Activated T-helper 1 cell treated with anti-CD3 and anti-CD28 coated beads, Interleukin-12 subunit alpha, Interleukin-12 subunit beta, Interleukin-2, Interleukin-4 antibody, amounts not matched to agents 30 ng/mL and 10 ng/mL and 1 ng/mL, durations not matched to agents 14 hours and 24 hours and 36 hours (primary cell): ENCODE measurements at regions of chr1 and their contacts with region 1.

Region 1: GRCh38 chr1:77143529-77144121 is 75.6 kb downstream of the PIGK start:
- DNase-seq: no peak
- H3K4me3 Mint-ChIP-seq: no peak overlapping the region
- H3K27ac Mint-ChIP-seq: no peak overlapping the region
- H3K4me1 Mint-ChIP-seq: no peaks in the 10 kb centered on the region
- H3K27me3 Mint-ChIP-seq: no peaks in the 10 kb centered on the region

Region 2: GRCh38 chr1:75991497-75992114 is 1152.0 kb before region 1 on chr1:
- intact Hi-C with region 1: loop called (anchors 1 kb)
- DNase-seq: peak; percentile 25
- H3K4me3 Mint-ChIP-seq: no peak overlapping the region
- H3K27ac Mint-ChIP-seq: no peak overlapping the region
- H3K4me1 Mint-ChIP-seq: no peaks in the 10 kb centered on the region
- H3K27me3 Mint-ChIP-seq: peaks cover 9% of the 10 kb centered on the region

Region 3: GRCh38 chr1:76330991-76331603 is 812.5 kb before region 1 on chr1:
- intact Hi-C with region 1: loop called (anchors 5 kb)
- DNase-seq: peak; percentile 4
- H3K4me3 Mint-ChIP-seq: no peak overlapping the region
- H3K27ac Mint-ChIP-seq: no peak overlapping the region
- H3K4me1 Mint-ChIP-seq: peaks cover 9% of the 10 kb centered on the region
- H3K27me3 Mint-ChIP-seq: peaks cover 4% of the 10 kb centered on the region

Region 4: GRCh38 chr1:76901158-76901767 is 242.4 kb before region 1 on chr1:
- intact Hi-C with region 1: loop called (anchors 10 kb)
- DNase-seq: peak; percentile 7
- H3K4me3 Mint-ChIP-seq: no peak overlapping the region
- H3K27ac Mint-ChIP-seq: no peak overlapping the region
- H3K4me1 Mint-ChIP-seq: no peaks in the 10 kb centered on the region
- H3K27me3 Mint-ChIP-seq: no peaks in the 10 kb centered on the region

Region 5: GRCh38 chr1:77081834-77082233 is 61.8 kb before region 1 on chr1:
- intact Hi-C with region 1: no loop called
- DNase-seq: no peak
- H3K4me3 Mint-ChIP-seq: no peak overlapping the region
- H3K27ac Mint-ChIP-seq: no peak overlapping the region
- H3K4me1 Mint-ChIP-seq: no peaks in the 10 kb centered on the region
- H3K27me3 Mint-ChIP-seq: peaks cover 4% of the 10 kb centered on the region

Region 6: GRCh38 chr1:77100870-77101269 is 42.8 kb before region 1 on chr1:
- intact Hi-C with region 1: no loop called
- DNase-seq: no peak
- H3K4me3 Mint-ChIP-seq: no peak overlapping the region
- H3K27ac Mint-ChIP-seq: no peak overlapping the region
- H3K4me1 Mint-ChIP-seq: no peaks in the 10 kb centered on the region
- H3K27me3 Mint-ChIP-seq: no peaks in the 10 kb centered on the region

Region 7: DNA sequence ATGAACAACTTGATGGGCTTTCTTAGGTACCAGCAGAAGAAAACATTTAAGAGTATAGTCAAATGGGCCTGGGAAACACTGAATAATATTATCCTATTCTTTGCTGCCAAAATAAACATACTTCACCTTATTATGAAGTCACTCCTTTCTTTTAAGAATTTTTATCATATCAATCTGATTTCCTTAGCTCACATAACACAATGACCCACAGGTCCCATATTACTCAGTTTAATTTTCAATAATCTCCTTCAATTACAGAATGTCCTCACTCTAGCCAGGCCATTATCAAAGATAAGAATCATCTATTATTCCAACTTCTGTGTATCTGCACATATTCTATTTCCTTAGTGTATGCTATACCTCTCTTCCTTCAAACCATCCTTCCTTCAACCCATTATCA is 12.6 kb after region 1 on chr1:
- intact Hi-C with region 1: no loop called
- DNase-seq: no peak
- H3K4me3 Mint-ChIP-seq: no peak overlapping the region
- H3K27ac Mint-ChIP-seq: no peak overlapping the region
- H3K4me1 Mint-ChIP-seq: no peaks in the 10 kb centered on the region
- H3K27me3 Mint-ChIP-seq: no peaks in the 10 kb centered on the region

Region 8: DNA sequence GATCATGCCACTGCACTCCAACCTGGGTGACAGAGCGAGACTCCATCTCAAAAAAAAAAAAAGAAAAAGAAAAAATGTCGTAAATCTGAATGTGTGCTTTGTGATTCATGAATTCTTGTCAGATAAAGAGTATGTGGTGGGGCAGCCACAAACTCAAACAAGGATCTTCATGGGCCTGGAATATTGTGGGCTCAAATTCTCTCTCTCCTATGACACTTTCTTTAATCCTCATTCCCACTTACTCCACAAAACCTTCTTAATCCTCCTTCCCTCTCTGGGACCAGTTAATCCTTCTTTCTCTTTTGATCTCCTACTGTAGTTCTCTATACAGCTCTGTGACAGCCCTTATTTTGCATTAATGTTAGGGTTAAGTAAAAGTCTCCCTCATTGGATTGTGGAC is 250.5 kb after region 1 on chr1:
- intact Hi-C with region 1: no loop called
- DNase-seq: no peak
- H3K4me3 Mint-ChIP-seq: no peak overlapping the region
- H3K27ac Mint-ChIP-seq: no peak overlapping the region
- H3K4me1 Mint-ChIP-seq: no peaks in the 10 kb centered on the region
- H3K27me3 Mint-ChIP-seq: peaks cover 2% of the 10 kb centered on the region

Region 9: DNA sequence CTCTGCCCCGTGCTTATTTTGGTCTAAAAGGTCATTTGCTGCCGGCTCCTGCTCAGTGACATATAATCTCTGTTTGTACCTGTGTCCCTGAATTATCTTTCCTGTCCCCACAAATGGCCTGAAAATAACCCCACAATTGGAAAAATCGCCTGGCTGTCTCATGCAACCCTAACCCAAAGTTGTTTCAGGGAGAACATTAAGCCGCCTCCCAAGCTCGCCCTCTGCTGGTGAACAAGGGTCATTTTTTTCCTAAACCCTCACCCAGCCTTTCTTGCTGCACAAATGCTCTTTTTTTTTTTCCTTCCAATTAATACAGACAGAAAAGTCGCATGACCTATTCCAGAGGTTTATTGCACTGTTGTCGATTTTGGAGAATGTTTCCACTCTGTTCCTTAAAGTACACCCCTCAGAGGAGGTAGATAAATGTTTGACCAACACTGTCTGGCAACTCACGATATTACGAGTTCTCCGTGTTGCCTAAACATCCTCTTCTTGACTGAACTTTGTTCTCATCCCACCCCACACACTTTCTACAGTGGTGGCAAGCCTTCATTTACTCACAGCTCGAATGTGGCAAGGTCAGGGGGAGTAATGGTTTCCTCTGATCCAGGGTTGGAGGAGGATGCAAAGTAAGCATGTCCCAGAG is 390.2 kb after region 1 on chr1:
- intact Hi-C with region 1: loop called (anchors 1 kb)
- DNase-seq: peak; percentile 18
- H3K4me3 Mint-ChIP-seq: no peak overlapping the region
- H3K27ac Mint-ChIP-seq: no peak overlapping the region
- H3K4me1 Mint-ChIP-seq: no peaks in the 10 kb centered on the region
- H3K27me3 Mint-ChIP-seq: no peaks in the 10 kb centered on the region

Region 10: GRCh38 chr1:78114034-78114956 is 970.7 kb after region 1 on chr1:
- intact Hi-C with region 1: loop called (anchors 1 kb)
- DNase-seq: peak; percentile 45
- H3K4me3 Mint-ChIP-seq: no peak overlapping the region
- H3K27ac Mint-ChIP-seq: no peak overlapping the region
- H3K4me1 Mint-ChIP-seq: no peaks in the 10 kb centered on the region
- H3K27me3 Mint-ChIP-seq: no peaks in the 10 kb centered on the region